ENCODE measurements at regions of chr20 and their contacts with region 1.

Region 1: DNA sequence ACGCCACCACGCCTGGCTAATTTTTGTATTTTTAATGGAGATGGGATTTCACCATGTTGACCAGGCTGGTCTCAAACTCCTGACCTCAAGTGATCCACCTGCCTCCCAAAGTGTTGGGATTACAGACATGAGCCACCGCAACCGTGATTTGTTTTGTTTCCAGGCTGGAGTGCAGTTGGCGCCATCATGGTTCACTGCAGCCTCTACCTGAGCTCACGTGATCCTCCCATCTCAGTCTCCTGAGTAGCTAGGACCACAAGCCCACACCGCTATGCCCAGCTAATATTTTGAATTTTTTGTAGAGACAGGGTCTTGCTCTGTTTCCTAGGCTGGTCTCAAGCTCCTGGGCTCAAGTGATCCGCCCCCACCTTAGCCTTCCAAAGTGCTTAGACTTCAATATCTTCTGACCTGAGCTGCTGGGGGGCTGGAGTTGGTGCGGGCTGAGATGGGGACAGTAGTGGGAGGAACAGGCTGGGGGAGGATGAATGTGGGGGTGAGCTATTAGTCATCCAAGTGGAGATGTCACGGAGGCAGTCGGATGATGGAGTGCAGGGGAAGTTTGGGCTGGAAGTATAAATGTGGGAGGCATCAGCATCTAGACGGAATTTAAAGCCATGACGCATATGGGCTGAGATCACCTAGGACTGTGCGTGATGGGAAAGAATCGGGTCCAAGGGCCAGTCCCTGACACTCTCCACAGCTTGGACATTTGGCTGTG is 23.1 kb upstream of the ZMYND8 start:
- DNase-seq: peak; percentile 56 to 92
- ATAC-seq: peak; percentile 72 to 74
- H3K4me3 ChIP-seq: no peak overlapping the region
- H3K27ac ChIP-seq: peak overlapping the region; percentile 90 to 92
- H3K4me1 ChIP-seq: peaks cover 60% of the 10 kb centered on the region
- CTCF ChIP-seq: no peak
- EP300 ChIP-seq: peak; percentile 89 to 93
- POLR2A ChIP-seq: no peak
- RAD21 ChIP-seq: peak in 1 of 2 experiments; percentile 7; a peak in 3 of 5 replicates

Region 2: DNA sequence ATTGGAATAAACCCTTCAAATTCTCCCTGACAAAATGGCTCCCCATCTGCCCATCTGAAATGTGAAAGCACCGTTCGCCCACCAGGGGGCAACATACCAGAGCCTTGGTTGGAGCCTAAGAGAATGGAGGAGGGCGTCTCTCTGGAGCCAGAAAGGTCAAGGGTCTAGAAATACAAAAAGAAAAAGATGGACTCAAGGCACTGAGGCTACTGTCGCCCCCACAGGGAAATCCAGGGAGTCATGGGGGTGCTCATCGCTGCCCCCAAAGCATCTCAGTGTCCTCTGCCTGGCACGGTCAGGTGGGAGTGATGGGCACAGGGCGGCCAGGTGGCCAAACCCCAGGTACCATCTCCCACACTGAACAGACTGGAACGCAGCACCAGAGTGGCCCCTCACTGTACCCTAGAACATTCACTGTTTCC is 159.4 kb before region 1 on chr20:
- CTCF ChIA-PET with region 1: interaction called, 30 read pairs
- POLR2A ChIA-PET with region 1: no interaction called
- DNase-seq: peak; percentile 49 to 53
- ATAC-seq: peak in 1 of 2 experiments; percentile 79; a peak in 3 of 6 replicates
- H3K4me3 ChIP-seq: no peak overlapping the region
- H3K27ac ChIP-seq: no peak overlapping the region
- H3K4me1 ChIP-seq: no peaks in the 10 kb centered on the region
- CTCF ChIP-seq: peak; percentile 52
- EP300 ChIP-seq: no peak
- POLR2A ChIP-seq: no peak
- RAD21 ChIP-seq: peak; percentile 24 to 43; a peak in 2 of 5 replicates

Region 3: DNA sequence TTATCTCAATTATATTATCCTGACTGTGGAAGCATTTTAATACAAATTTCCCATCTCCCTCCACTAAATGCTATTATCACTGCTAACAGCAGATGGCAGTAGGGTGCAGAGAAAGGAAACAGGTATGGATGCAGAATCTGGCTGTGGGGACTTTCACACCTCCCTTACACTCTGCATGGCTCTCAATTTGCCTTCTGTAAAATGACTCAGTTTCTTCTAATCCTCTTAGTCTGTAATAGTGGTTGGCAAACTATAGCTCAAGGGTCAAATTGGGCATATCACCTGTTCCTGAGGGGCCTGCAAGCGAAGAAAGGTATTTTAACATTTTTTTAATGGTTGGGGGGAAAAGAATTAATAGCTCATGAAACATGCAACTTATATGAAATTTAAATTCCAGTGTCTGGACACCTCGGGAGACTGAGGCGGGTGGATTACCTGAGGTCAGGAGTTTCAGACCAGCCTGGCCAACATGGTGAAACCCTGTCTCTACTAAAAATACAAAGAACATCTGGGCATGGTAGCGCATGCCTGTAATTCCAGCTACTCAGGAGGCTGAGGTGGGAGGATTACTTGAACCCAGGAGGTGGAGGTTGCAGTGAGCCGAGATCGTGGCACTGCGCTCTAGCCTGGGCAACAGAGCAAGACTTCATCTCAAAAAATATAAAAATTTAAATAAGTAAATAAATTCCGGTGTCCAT is 106.5 kb before region 1 on chr20:
- CTCF ChIA-PET with region 1: interaction called, 684 read pairs
- POLR2A ChIA-PET with region 1: interaction called, 52 read pairs
- DNase-seq: peak; percentile 67 to 77
- ATAC-seq: peak; percentile 63 to 68; a peak in 4 of 6 replicates
- H3K4me3 ChIP-seq: no peak overlapping the region
- H3K27ac ChIP-seq: peak overlapping the region; percentile 84 to 93
- H3K4me1 ChIP-seq: peaks cover 61% of the 10 kb centered on the region
- CTCF ChIP-seq: peak; percentile 95
- EP300 ChIP-seq: no peak
- POLR2A ChIP-seq: no peak
- RAD21 ChIP-seq: peak; percentile 98 to 99

Region 4: GRCh38 chr20:47312020-47312662 is 67.5 kb before region 1 on chr20:
- CTCF ChIA-PET with region 1: interaction called, 63 read pairs
- POLR2A ChIA-PET with region 1: interaction called, 3 read pairs
- DNase-seq: no peak
- ATAC-seq: no peak
- H3K4me3 ChIP-seq: no peak overlapping the region
- H3K27ac ChIP-seq: peak overlapping the region; percentile 94 to 97
- H3K4me1 ChIP-seq: peaks cover 45% of the 10 kb centered on the region
- CTCF ChIP-seq: no peak
- EP300 ChIP-seq: no peak
- POLR2A ChIP-seq: no peak
- RAD21 ChIP-seq: no peak

Region 5: DNA sequence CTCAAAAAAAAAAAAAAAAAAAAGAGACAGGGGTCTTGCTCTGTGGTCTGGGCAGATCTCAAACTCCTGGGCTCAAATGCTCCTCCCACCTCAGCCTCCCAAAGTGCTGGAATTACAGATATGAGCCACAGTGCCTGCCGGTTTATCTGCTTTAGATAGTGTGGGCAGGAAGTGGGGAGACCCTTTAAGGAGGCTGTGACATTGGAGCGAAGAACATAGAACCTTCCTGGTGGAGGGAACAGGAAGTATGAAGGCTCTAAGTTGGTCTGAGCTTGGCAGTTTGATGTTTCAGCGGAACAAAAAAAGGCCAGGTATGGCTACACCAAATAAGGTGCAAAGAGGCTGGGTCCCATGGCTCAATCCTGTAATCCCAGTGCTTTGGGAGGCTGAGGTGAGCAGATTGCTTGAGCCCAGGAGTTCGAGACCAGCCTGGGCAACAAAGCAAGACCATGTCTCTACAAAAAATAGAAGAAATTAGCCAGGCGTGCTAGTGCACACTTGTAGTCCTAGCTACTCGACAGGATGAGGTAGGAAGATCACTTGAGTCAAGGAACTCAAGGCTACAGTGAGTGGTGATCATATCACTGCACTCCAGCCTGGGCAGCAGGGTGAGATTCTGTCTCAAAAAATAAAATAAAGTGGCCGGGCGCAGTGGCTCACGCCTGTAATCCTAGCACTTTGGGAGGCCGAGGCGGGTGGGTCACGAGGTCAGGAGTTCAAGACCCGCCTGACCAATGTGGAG is 14.4 kb before region 1 on chr20:
- CTCF ChIA-PET with region 1: interaction called, 102 read pairs
- POLR2A ChIA-PET with region 1: interaction called, 11 read pairs
- DNase-seq: no peak
- ATAC-seq: no peak
- H3K4me3 ChIP-seq: no peak overlapping the region
- H3K27ac ChIP-seq: peak overlapping the region; percentile 63 to 92
- H3K4me1 ChIP-seq: peaks cover 36% of the 10 kb centered on the region
- CTCF ChIP-seq: no peak
- EP300 ChIP-seq: no peak
- POLR2A ChIP-seq: no peak
- RAD21 ChIP-seq: no peak

Region 6: GRCh38 chr20:47464380-47465101 is 84.9 kb after region 1 on chr20:
- CTCF ChIA-PET with region 1: interaction called, 21 read pairs
- POLR2A ChIA-PET with region 1: no interaction called
- DNase-seq: peak; percentile 97 to 99
- ATAC-seq: peak; percentile 97 to 98
- H3K4me3 ChIP-seq: no peak overlapping the region
- H3K27ac ChIP-seq: peak overlapping the region; percentile 88 to 95
- H3K4me1 ChIP-seq: peaks cover 46% of the 10 kb centered on the region
- CTCF ChIP-seq: no peak; the same call in 1 of the 3 replicates
- EP300 ChIP-seq: peak; percentile 93 to 96
- POLR2A ChIP-seq: no peak
- RAD21 ChIP-seq: peak; percentile 71 to 83

Measured in A549 (cell line).